ENCODE measurements at regions of chr16 and their contacts with region 1.

Region 1: GRCh38 chr16:83464991-83465390 is 342.8 kb upstream of the HSBP1 start:
- DNase-seq: no peak
- H3K4me3 ChIP-seq: no peak overlapping the region
- CTCF ChIP-seq: no peak
- POLR2A ChIP-seq: no peak

Region 2: GRCh38 chr16:82124651-82125050 is 1340.3 kb before region 1 on chr16:
- intact Hi-C with region 1: loop called (anchors 5 kb)
- DNase-seq: no peak
- H3K4me3 ChIP-seq: no peak overlapping the region
- CTCF ChIP-seq: no peak
- POLR2A ChIP-seq: no peak

Region 3: GRCh38 chr16:83674931-83675535 is 210.0 kb after region 1 on chr16:
- intact Hi-C with region 1: no loop called
- DNase-seq: peak in 1 of 2 donors; percentile 58
- H3K4me3 ChIP-seq: no peak overlapping the region
- CTCF ChIP-seq: no peak
- POLR2A ChIP-seq: no peak

Measured in lower leg skin (tissue), 4 donors.